CD4-positive, alpha-beta T cell (primary cell): ENCODE measurements at regions of chr6 and their contacts with region 1.

Region 1: GRCh38 chr6:43334466-43335095 is 26.0 kb upstream of the CRIP3 start:
- DNase-seq: peak in 3 of 14 experiments; percentile 30 to 46 (median 46)
- ATAC-seq: no peak
- H3K4me3 ChIP-seq: no peak overlapping the region
- H3K4me3 Mint-ChIP-seq: no peak overlapping the region
- H3K27ac ChIP-seq: no peak overlapping the region
- H3K27ac Mint-ChIP-seq: peak overlapping the region; percentile 22
- H3K4me1 ChIP-seq: peaks cover 12% of the 10 kb centered on the region
- H3K4me1 Mint-ChIP-seq: peaks cover 25% of the 10 kb centered on the region
- H3K27me3 ChIP-seq: no peaks in the 10 kb centered on the region
- H3K27me3 Mint-ChIP-seq: no peaks in the 10 kb centered on the region
- CTCF ChIP-seq: peak; percentile 54

Region 2: GRCh38 chr6:43026365-43026764 is 308.2 kb before region 1 on chr6:
- CTCF ChIA-PET with region 1: no interaction called
- POLR2A ChIA-PET with region 1: no interaction called
- intact Hi-C with region 1: no loop called
- DNase-seq: no peak
- ATAC-seq: no peak
- H3K4me3 ChIP-seq: no peak overlapping the region
- H3K4me3 Mint-ChIP-seq: no peak overlapping the region
- H3K27ac ChIP-seq: no peak overlapping the region
- H3K27ac Mint-ChIP-seq: no peak overlapping the region
- H3K4me1 ChIP-seq: peaks cover 31% of the 10 kb centered on the region
- H3K4me1 Mint-ChIP-seq: peaks cover 16% of the 10 kb centered on the region
- H3K27me3 ChIP-seq: no peaks in the 10 kb centered on the region
- H3K27me3 Mint-ChIP-seq: no peaks in the 10 kb centered on the region
- CTCF ChIP-seq: no peak

Region 3: DNA sequence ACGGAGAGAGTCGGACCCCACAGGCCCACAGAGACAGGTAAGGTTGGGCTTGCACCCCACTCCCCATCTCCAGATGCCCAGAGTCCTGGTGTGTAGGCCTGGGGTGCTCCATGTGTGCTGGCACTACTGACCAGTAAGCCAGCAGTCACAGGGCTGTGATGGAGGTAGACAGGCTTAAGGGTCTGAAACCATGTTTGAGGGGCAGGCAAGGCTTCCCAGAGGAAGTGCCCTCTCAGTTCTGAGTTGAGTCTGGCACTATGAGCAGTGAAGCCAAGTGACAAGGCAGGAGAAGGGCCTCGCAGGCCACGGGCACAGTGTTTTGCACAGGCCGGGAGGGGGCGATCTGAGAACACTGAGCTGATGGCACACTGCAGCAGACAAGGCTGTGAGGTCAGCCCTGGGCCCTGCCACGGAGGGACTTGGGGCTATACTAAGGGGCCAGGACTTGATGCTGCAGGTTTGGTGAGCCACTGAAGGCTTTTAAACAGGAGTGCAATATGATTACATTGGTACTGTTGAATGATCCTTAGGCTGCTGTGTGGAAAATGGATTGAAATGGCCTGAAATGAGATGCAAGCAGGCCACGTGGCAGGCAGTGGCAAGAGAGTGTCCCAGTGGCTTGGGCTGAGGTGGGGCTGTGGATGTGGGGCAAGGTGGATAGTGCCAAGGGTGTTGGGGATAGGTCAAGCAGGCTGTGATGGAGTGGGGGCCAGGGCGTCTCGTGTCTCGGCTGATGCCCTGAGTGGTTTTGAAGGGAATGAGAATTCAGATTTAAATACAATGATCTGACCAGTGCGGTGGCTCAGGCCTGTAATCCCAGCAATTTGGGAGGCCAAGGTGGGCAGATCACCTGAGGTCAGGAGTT is 71.0 kb before region 1 on chr6:
- CTCF ChIA-PET with region 1: no interaction called
- POLR2A ChIA-PET with region 1: no interaction called
- intact Hi-C with region 1: loop called (anchors 5 kb)
- DNase-seq: peak; percentile 62 to 85 (median 73)
- ATAC-seq: peak; percentile 96
- H3K4me3 ChIP-seq: no peak overlapping the region
- H3K4me3 Mint-ChIP-seq: no peak overlapping the region
- H3K27ac ChIP-seq: no peak overlapping the region
- H3K27ac Mint-ChIP-seq: no peak overlapping the region
- H3K4me1 ChIP-seq: peaks cover 3% of the 10 kb centered on the region
- H3K4me1 Mint-ChIP-seq: no peaks in the 10 kb centered on the region
- H3K27me3 ChIP-seq: peaks cover 0 to 2% of the 10 kb centered on the region in 2 experiments
- H3K27me3 Mint-ChIP-seq: no peaks in the 10 kb centered on the region
- CTCF ChIP-seq: peak; percentile 72

Region 4: DNA sequence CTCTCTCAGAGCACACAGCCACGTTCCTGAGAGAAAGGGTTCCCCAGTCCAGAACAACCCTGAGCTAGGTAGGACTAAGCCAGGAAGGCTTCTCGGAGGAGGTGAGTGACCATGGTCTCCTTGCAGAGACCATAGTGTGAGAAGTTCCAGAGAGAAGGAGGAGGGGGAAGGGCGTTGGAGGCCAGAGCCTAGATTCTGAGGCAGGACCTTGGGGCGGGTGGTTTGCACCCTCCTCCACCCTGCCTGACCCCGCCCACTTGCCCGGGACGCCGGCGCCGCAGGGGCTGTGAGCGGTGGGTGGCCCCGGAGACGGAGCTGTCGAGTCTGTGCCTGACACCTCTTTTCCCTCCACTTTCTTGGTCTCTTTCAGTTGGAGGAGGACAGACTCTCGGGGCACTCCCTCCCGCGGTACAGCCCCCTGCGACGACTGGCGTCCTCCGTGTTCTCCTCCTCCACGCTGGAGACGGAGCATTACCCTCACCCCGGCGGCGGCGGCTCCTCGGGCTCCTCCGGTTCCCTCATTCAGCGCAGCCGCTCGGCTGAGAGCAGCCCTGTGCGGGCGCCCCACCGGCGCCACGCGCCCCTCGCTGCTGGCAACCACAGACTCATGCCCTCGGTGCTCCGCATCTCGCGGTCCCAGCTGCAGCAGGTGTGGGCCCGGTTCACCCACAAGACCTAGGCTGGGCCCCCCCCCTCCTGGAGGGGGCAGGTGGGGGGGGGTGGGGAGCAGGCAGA is 65.1 kb before region 1 on chr6:
- CTCF ChIA-PET with region 1: no interaction called
- POLR2A ChIA-PET with region 1: no interaction called
- intact Hi-C with region 1: loop called (anchors 5 kb)
- DNase-seq: peak in 12 of 14 experiments; percentile 6 to 63 (median 35)
- ATAC-seq: peak; percentile 81
- H3K4me3 ChIP-seq: peak overlapping the region; percentile 58
- H3K4me3 Mint-ChIP-seq: peak overlapping the region; percentile 62
- H3K27ac ChIP-seq: no peak overlapping the region
- H3K27ac Mint-ChIP-seq: no peak overlapping the region
- H3K4me1 ChIP-seq: peaks cover 15% of the 10 kb centered on the region
- H3K4me1 Mint-ChIP-seq: peaks cover 19% of the 10 kb centered on the region
- H3K27me3 ChIP-seq: peaks cover 0 to 4% of the 10 kb centered on the region in 2 experiments
- H3K27me3 Mint-ChIP-seq: peaks cover 16% of the 10 kb centered on the region
- CTCF ChIP-seq: no peak

Region 5: DNA sequence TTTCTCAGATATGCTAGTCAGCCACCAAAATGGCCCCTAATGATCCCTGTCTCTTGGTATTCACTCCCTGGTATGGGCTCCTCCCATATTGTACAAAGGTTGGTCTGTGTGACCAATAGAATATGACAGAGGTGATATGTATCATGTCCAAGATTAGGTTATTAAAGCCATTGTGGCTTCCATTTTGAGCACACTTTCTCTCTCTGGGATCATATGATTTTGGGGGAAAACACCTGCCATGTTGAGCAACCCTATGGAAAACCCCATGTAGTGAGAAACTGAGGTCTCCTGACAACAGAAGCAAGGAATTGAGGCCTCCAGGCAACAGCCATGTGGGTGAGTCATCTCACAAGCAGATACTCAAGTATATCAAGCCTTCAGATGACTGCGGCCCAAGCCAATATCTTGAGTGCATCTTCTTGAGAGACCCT is 42.0 kb after region 1 on chr6:
- CTCF ChIA-PET with region 1: no interaction called
- POLR2A ChIA-PET with region 1: no interaction called
- intact Hi-C with region 1: no loop called
- DNase-seq: peak in 2 of 14 experiments; percentile 46 to 63
- ATAC-seq: no peak
- H3K4me3 ChIP-seq: no peak overlapping the region
- H3K4me3 Mint-ChIP-seq: no peak overlapping the region
- H3K27ac ChIP-seq: no peak overlapping the region
- H3K27ac Mint-ChIP-seq: no peak overlapping the region
- H3K4me1 ChIP-seq: peaks cover 8% of the 10 kb centered on the region
- H3K4me1 Mint-ChIP-seq: peaks cover 30% of the 10 kb centered on the region
- H3K27me3 ChIP-seq: no peaks in the 10 kb centered on the region
- H3K27me3 Mint-ChIP-seq: no peaks in the 10 kb centered on the region
- CTCF ChIP-seq: no peak